A549 (cell line): ENCODE measurements at regions of chr12 and their contacts with region 1.

Region 1: DNA sequence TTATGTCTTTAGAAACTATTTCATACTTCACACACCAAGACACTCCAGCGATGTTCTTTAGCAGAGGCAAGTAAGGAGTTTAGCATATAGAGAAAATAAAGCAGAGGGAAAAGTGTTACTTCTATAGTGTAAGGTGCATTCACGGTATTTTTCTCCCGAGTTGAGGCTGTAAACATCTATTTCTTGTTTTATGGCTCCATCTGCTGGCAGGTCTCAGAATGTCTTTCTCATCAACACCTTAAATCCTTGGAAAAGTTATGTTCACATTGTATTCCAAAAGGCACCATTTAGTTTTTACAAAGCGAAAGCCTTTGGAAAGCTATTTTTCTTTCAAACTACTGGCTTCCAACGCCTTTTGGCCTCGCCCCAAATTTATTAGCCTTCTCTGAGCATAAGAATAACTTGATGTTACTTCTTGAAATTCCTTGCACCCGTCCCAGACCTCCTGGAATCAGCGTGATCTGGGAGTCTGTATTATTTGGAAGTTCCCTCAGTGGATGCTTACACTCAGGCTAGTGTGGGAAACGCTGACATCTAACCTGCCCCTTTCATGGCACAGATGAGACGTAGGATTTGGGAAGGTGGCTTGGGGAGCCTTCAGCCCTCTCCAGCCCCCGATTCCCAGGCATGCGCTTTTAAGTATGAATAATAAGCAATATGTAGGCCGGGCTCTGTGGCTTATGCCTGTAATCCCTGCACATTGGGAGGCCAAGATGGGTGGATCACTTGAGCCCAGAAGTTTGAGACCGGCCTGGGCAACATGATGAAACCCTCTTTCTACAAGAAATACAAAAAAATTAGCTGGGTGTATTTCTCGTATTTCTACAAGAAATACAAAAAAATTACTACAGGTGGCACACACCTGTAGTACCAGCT is 1.9 kb upstream of the PIWIL1 start:
- DNase-seq: peak; percentile 49 to 73
- ATAC-seq: peak; percentile 65 to 85; a peak in 4 of 6 replicates
- H3K4me3 ChIP-seq: no peak overlapping the region
- H3K27ac ChIP-seq: no peak overlapping the region
- H3K4me1 ChIP-seq: no peaks in the 10 kb centered on the region
- CTCF ChIP-seq: peak; percentile 85
- EP300 ChIP-seq: no peak
- POLR2A ChIP-seq: no peak
- RAD21 ChIP-seq: peak; percentile 87 to 95

Region 2: DNA sequence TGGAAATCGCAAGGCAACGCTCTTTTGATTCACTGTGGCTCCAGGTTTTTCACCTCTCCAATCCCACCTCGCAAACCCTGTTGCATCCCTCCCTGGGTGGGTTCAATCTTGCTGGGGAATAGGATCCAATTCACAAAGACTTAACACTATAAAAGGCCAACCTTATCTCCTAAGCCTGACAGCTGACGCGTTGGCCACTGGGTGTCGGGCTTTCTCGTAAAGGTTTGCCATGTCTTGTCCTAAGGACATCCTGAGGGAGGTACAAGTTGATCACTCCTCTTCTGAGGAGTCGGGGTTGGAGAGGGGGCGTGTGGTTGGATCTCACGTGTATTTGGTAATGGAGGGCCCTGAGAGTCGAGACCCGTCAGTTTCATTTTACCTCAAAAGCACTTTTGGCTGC is 286.1 kb before region 1 on chr12:
- CTCF ChIA-PET with region 1: interaction called, 31 read pairs
- POLR2A ChIA-PET with region 1: no interaction called
- DNase-seq: peak in 1 of 2 experiments; percentile 18
- ATAC-seq: peak in 1 of 2 experiments; percentile 40; a peak in 1 of 6 replicates
- H3K4me3 ChIP-seq: no peak overlapping the region
- H3K27ac ChIP-seq: no peak overlapping the region
- H3K4me1 ChIP-seq: no peaks in the 10 kb centered on the region
- CTCF ChIP-seq: no peak
- EP300 ChIP-seq: no peak
- POLR2A ChIP-seq: no peak
- RAD21 ChIP-seq: no peak

Region 3: GRCh38 chr12:130104571-130105106 is 231.1 kb before region 1 on chr12:
- CTCF ChIA-PET with region 1: no interaction called
- POLR2A ChIA-PET with region 1: no interaction called
- DNase-seq: no peak
- ATAC-seq: no peak
- H3K4me3 ChIP-seq: no peak overlapping the region
- H3K27ac ChIP-seq: no peak overlapping the region
- H3K4me1 ChIP-seq: peaks cover 8% of the 10 kb centered on the region; the same call in 2 of the 3 replicates
- CTCF ChIP-seq: no peak
- EP300 ChIP-seq: no peak
- POLR2A ChIP-seq: no peak
- RAD21 ChIP-seq: no peak

Region 4: GRCh38 chr12:131116391-131117117 is 780.8 kb after region 1 on chr12:
- CTCF ChIA-PET with region 1: no interaction called
- POLR2A ChIA-PET with region 1: no interaction called
- DNase-seq: peak; percentile 36 to 45
- ATAC-seq: peak; percentile 60 to 83; a peak in 5 of 6 replicates
- H3K4me3 ChIP-seq: no peak overlapping the region
- H3K27ac ChIP-seq: no peak overlapping the region; a peak in 1 of 6 replicates
- H3K4me1 ChIP-seq: peaks cover 16% of the 10 kb centered on the region
- CTCF ChIP-seq: peak; percentile 56
- EP300 ChIP-seq: no peak
- POLR2A ChIP-seq: no peak
- RAD21 ChIP-seq: peak; percentile 76 to 84